HCT116 (cell line): ENCODE measurements at regions of chr9 and their contacts with region 1.

Region 1: GRCh38 chr9:33466565-33467495 is 6.9 kb downstream of the NOL6 start:
- DNase-seq: no peak
- ATAC-seq: peak; percentile 84
- H3K4me3 ChIP-seq: no peak overlapping the region
- H3K27ac ChIP-seq: no peak overlapping the region
- H3K4me1 ChIP-seq: peaks cover 0 to 1% of the 10 kb centered on the region in 2 experiments; a peak in 2 of 4 replicates
- H3K27me3 ChIP-seq: no peaks in the 10 kb centered on the region
- CTCF ChIP-seq: peak; percentile 88 to 97 (median 93)
- POLR2A ChIP-seq: no peak
- RAD21 ChIP-seq: peak; percentile 95

Region 2: DNA sequence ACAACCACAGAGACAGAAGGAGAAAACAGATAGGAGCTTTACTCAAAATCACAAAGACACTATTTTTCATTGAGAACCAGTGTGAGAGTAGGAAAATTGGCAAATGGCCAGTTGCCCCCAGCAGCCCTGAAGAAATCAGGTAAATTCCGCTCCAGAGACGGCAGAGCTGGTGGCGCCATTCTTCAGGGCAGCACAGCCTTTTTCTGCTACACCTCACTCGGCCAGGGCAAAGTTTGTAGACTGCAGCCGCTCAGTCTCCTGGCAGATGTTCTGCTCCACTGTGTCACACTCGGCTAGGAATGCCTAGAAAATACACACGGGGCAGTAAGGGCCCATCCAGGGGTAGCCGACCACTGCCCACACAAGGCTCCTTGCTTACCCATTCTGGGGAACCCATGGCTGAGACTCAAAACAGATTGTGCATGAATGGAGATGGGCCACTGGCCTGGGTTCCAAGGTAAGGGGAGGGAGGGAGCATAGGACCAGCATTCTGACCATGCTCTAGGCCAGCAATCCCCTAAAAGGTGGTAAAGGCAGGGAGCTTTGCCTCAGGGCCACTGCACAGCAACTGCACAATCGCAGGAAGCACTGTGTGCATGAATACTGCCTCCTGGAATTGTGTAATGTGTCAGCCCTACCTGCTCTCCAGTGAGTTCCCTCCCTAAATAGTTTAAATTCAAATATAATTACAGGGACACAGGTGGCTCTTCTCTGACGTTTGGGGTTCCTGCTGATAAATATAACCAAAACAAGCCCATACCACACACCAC is 211.6 kb before region 1 on chr9:
- CTCF ChIA-PET with region 1: no interaction called
- POLR2A ChIA-PET with region 1: no interaction called
- RAD21 ChIA-PET with region 1: no interaction called
- intact Hi-C with region 1: no loop called
- DNase-seq: no peak
- ATAC-seq: no peak
- H3K4me3 ChIP-seq: no peak overlapping the region
- H3K27ac ChIP-seq: no peak overlapping the region
- H3K4me1 ChIP-seq: no peaks in the 10 kb centered on the region
- H3K27me3 ChIP-seq: no peaks in the 10 kb centered on the region
- CTCF ChIP-seq: no peak
- POLR2A ChIP-seq: no peak
- RAD21 ChIP-seq: no peak

Region 3: GRCh38 chr9:33290247-33291030 is 176.4 kb before region 1 on chr9 and contains the start of gene NFX1:
- CTCF ChIA-PET with region 1: interaction called, 15 read pairs
- POLR2A ChIA-PET with region 1: no interaction called
- RAD21 ChIA-PET with region 1: interaction called in 1 of 2 experiments, 3 read pairs
- intact Hi-C with region 1: loop called (anchors 2 kb)
- DNase-seq: peak; percentile 95
- ATAC-seq: peak; percentile 94
- H3K4me3 ChIP-seq: peak within 1 kb of the TSS; percentile 80 to 85
- H3K27ac ChIP-seq: peak within 1 kb of the TSS; percentile 83
- H3K4me1 ChIP-seq: peaks cover 5 to 22% of the 10 kb centered on the region in 2 experiments; a peak in 2 of 4 replicates
- H3K27me3 ChIP-seq: no peaks in the 10 kb centered on the region
- CTCF ChIP-seq: no peak
- POLR2A ChIP-seq: peak; percentile 68
- RAD21 ChIP-seq: no peak
- total RNA-seq, gene NFX1: 31.7 TPM

Region 4: GRCh38 chr9:33374634-33375213 is 92.1 kb before region 1 on chr9:
- CTCF ChIA-PET with region 1: interaction called, 41 read pairs
- POLR2A ChIA-PET with region 1: no interaction called
- RAD21 ChIA-PET with region 1: interaction called, 5 to 8 read pairs
- intact Hi-C with region 1: loop called (anchors 1 kb)
- DNase-seq: peak; percentile 64
- ATAC-seq: peak; percentile 80
- H3K4me3 ChIP-seq: peak overlapping the region; percentile 40 to 53; a peak in 3 of 4 replicates
- H3K27ac ChIP-seq: peak overlapping the region; percentile 67; the same call in 1 of the 2 replicates
- H3K4me1 ChIP-seq: peaks cover 9 to 20% of the 10 kb centered on the region in 2 experiments
- H3K27me3 ChIP-seq: no peaks in the 10 kb centered on the region
- CTCF ChIP-seq: peak; percentile 86 to 93 (median 90)
- POLR2A ChIP-seq: no peak
- RAD21 ChIP-seq: peak; percentile 82

Region 5: GRCh38 chr9:33404788-33405362 is 62.0 kb before region 1 on chr9:
- CTCF ChIA-PET with region 1: interaction called, 53 read pairs
- POLR2A ChIA-PET with region 1: no interaction called
- RAD21 ChIA-PET with region 1: interaction called, 6 to 11 read pairs
- intact Hi-C with region 1: loop called (anchors 1 kb)
- DNase-seq: no peak
- ATAC-seq: 0 out of 2 replicates have a peak, but pooled peaks have one; percentile 14
- H3K4me3 ChIP-seq: no peak overlapping the region
- H3K27ac ChIP-seq: no peak overlapping the region
- H3K4me1 ChIP-seq: peaks cover 0 to 3% of the 10 kb centered on the region in 2 experiments; a peak in 1 of 4 replicates
- H3K27me3 ChIP-seq: no peaks in the 10 kb centered on the region
- CTCF ChIP-seq: no peak
- POLR2A ChIP-seq: no peak
- RAD21 ChIP-seq: no peak

Region 6: GRCh38 chr9:33446946-33447798 is 19.7 kb before region 1 on chr9 and contains the start of gene AQP3:
- CTCF ChIA-PET with region 1: interaction called, 29 read pairs
- POLR2A ChIA-PET with region 1: no interaction called
- RAD21 ChIA-PET with region 1: no interaction called
- intact Hi-C with region 1: no loop called
- DNase-seq: no peak
- ATAC-seq: peak; percentile 90
- H3K4me3 ChIP-seq: peak within 1 kb of the TSS; percentile 46 to 61
- H3K27ac ChIP-seq: no peak within 1 kb of the TSS
- H3K4me1 ChIP-seq: peaks cover 44 to 53% of the 10 kb centered on the region in 2 experiments
- H3K27me3 ChIP-seq: no peaks in the 10 kb centered on the region
- CTCF ChIP-seq: peak; percentile 31 to 58 (median 42); a peak in 5 of 6 replicates
- POLR2A ChIP-seq: no peak
- RAD21 ChIP-seq: no peak
- total RNA-seq, gene AQP3: 5.5 TPM

Region 7: GRCh38 chr9:33452828-33453271 is 14.0 kb before region 1 on chr9:
- CTCF ChIA-PET with region 1: interaction called, 29 read pairs
- POLR2A ChIA-PET with region 1: interaction called, 5 read pairs
- RAD21 ChIA-PET with region 1: no interaction called
- intact Hi-C with region 1: no loop called
- DNase-seq: peak; percentile 63
- ATAC-seq: peak; percentile 87
- H3K4me3 ChIP-seq: peak overlapping the region in 1 of 2 experiments; percentile 13; a peak in 2 of 4 replicates
- H3K27ac ChIP-seq: peak overlapping the region; percentile 49
- H3K4me1 ChIP-seq: peaks cover 36 to 58% of the 10 kb centered on the region in 2 experiments
- H3K27me3 ChIP-seq: no peaks in the 10 kb centered on the region
- CTCF ChIP-seq: peak in 2 of 3 experiments; percentile 91; a peak in 4 of 6 replicates
- POLR2A ChIP-seq: no peak
- RAD21 ChIP-seq: no peak

Region 8: DNA sequence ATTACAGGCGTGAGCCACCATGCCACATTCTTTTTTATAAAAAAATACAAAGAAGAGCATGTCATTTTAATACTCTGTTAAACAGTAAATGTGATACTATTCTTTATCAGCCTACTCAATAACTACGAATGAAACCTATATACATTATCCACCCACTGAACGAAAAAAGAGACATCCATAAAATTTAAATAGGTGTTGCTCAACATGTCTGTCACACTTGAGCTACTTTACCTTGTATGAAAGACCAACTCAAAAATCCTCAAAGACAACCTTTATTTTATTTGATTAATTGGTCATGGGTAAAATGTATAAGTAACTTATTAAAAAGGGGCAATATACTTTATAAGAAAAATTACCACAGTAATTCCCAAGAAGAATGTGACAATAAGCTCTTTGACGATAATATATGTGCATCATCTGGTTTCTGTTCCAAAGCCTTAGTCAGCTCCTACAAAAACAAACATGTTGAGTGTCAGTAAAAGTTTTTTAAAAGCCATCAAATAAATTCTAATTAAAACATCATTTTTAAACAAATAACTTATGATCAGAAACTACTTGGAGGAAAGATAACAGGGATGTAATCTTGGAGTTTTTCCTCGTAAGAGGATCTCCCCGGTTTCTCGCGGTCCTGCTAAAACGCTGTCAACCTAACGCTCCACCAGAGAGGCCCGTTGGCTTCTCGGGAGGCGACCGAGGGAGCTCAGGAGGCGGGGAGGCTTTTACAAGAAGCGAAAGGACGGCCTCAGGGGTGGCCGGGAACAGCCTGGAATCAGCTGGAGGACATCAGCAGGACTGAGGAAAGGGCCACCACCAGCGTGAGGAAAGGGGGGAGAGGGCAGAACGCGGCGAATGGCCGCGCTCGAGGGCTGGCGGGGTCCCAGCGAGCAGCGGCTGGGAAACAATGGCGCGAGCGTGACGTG is 43.7 kb after region 1 on chr9:
- CTCF ChIA-PET with region 1: no interaction called
- POLR2A ChIA-PET with region 1: no interaction called
- RAD21 ChIA-PET with region 1: no interaction called
- intact Hi-C with region 1: no loop called
- DNase-seq: no peak
- ATAC-seq: peak; percentile 60
- H3K4me3 ChIP-seq: peak overlapping the region; percentile 48 to 60
- H3K27ac ChIP-seq: no peak overlapping the region
- H3K4me1 ChIP-seq: peaks cover 4 to 12% of the 10 kb centered on the region in 2 experiments; a peak in 3 of 4 replicates
- H3K27me3 ChIP-seq: no peaks in the 10 kb centered on the region
- CTCF ChIP-seq: no peak
- POLR2A ChIP-seq: peak; percentile 51
- RAD21 ChIP-seq: no peak

Region 9: GRCh38 chr9:33524306-33524947 is 57.6 kb after region 1 on chr9:
- CTCF ChIA-PET with region 1: no interaction called
- POLR2A ChIA-PET with region 1: no interaction called
- RAD21 ChIA-PET with region 1: no interaction called
- intact Hi-C with region 1: no loop called
- DNase-seq: no peak
- ATAC-seq: no peak
- H3K4me3 ChIP-seq: no peak overlapping the region
- H3K27ac ChIP-seq: no peak overlapping the region
- H3K4me1 ChIP-seq: no peaks in the 10 kb centered on the region
- H3K27me3 ChIP-seq: no peaks in the 10 kb centered on the region
- CTCF ChIP-seq: no peak
- POLR2A ChIP-seq: no peak
- RAD21 ChIP-seq: no peak